ENCODE measurements at regions of chr17 and their contacts with region 1.

Region 1: GRCh38 chr17:33674685-33675084 is 381.6 kb upstream of the ASIC2 start:
- DNase-seq: peak; percentile 17 to 85
- H3K4me3 ChIP-seq: no peak overlapping the region
- H3K27ac ChIP-seq: no peak overlapping the region
- H3K4me1 ChIP-seq: no peaks in the 10 kb centered on the region
- H3K27me3 ChIP-seq: no peaks in the 10 kb centered on the region
- CTCF ChIP-seq: peak; percentile 48 to 78 (median 70)
- EP300 ChIP-seq: no peak
- POLR2A ChIP-seq: no peak
- RAD21 ChIP-seq: peak; percentile 70 to 73

Region 2: DNA sequence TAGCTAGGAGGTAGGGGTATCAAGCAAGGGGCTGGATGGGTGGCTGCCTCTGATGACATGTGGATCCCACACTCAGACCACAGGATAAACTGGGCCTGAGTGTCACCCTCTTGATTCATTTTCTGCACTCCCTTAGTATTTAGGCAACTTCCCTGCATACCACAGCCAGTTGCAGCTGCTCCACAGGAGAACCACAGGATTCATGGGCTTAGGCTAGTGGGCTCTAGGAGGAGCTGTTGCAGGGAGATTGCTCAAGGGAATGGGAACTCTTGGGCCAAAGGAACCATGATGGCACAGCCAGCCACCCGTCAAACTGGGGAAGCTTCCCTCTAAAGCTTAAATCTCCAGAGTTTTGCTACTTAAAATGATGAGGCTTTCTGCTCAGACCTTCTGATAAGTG is 111.9 kb before region 1 on chr17:
- CTCF ChIA-PET with region 1: interaction called, 12 read pairs
- POLR2A ChIA-PET with region 1: no interaction called
- DNase-seq: no peak
- H3K4me3 ChIP-seq: no peak overlapping the region
- H3K27ac ChIP-seq: no peak overlapping the region
- H3K4me1 ChIP-seq: no peaks in the 10 kb centered on the region
- H3K27me3 ChIP-seq: no peaks in the 10 kb centered on the region
- CTCF ChIP-seq: peak; percentile 24 to 58 (median 53); a peak in 3 of 4 replicates
- EP300 ChIP-seq: no peak
- POLR2A ChIP-seq: no peak
- RAD21 ChIP-seq: peak; percentile 44 to 68

Region 3: GRCh38 chr17:33575021-33575420 is 99.7 kb before region 1 on chr17:
- CTCF ChIA-PET with region 1: no interaction called
- POLR2A ChIA-PET with region 1: no interaction called
- DNase-seq: no peak
- H3K4me3 ChIP-seq: no peak overlapping the region
- H3K27ac ChIP-seq: no peak overlapping the region
- H3K4me1 ChIP-seq: no peaks in the 10 kb centered on the region; a peak in 1 of 7 replicates
- H3K27me3 ChIP-seq: 0 out of 7 replicates have a peak, but pooled peaks cover 0 to 3% (median 0%) of the 10 kb centered on the region in 4 experiments
- CTCF ChIP-seq: no peak
- EP300 ChIP-seq: no peak
- POLR2A ChIP-seq: no peak
- RAD21 ChIP-seq: no peak

Region 4: DNA sequence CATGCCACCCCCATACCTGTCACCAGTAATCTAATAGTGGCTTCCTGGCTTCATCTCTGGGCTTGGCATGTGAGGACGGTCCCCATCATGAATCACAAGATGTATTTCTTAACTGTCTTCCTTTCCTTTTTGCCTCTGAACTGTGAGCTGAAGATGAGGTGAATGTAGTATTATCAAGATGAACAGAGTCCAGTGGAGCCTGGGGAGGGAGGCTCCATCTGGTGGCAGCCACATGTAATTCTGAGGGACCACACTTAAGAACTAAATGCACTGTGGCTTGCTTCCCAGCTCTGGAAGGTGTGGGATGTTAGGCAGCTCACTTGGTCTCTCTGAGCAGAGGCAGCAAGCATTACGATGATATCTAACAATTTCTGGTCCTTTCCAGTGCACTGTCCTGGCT is 26.7 kb before region 1 on chr17:
- CTCF ChIA-PET with region 1: interaction called, 47 read pairs
- POLR2A ChIA-PET with region 1: no interaction called
- DNase-seq: no peak
- H3K4me3 ChIP-seq: no peak overlapping the region
- H3K27ac ChIP-seq: no peak overlapping the region
- H3K4me1 ChIP-seq: peaks cover 0 to 4% (median 1%) of the 10 kb centered on the region in 4 experiments; a peak in 2 of 7 replicates
- H3K27me3 ChIP-seq: no peaks in the 10 kb centered on the region
- CTCF ChIP-seq: peak; percentile 66 to 78 (median 67)
- EP300 ChIP-seq: no peak
- POLR2A ChIP-seq: no peak
- RAD21 ChIP-seq: peak; percentile 64 to 74

Region 5: GRCh38 chr17:33686171-33686570 is 11.5 kb after region 1 on chr17:
- CTCF ChIA-PET with region 1: interaction called, 58 read pairs
- POLR2A ChIA-PET with region 1: no interaction called
- DNase-seq: peak; percentile 19 to 77
- H3K4me3 ChIP-seq: no peak overlapping the region
- H3K27ac ChIP-seq: no peak overlapping the region
- H3K4me1 ChIP-seq: no peaks in the 10 kb centered on the region
- H3K27me3 ChIP-seq: peaks cover 0 to 1% (median 0%) of the 10 kb centered on the region in 4 experiments; a peak in 1 of 7 replicates
- CTCF ChIP-seq: peak; percentile 51 to 65 (median 58)
- EP300 ChIP-seq: no peak
- POLR2A ChIP-seq: no peak
- RAD21 ChIP-seq: peak; percentile 25 to 46; a peak in 3 of 4 replicates

Region 6: GRCh38 chr17:33750943-33751701 is 76.4 kb after region 1 on chr17:
- CTCF ChIA-PET with region 1: interaction called, 16 read pairs
- POLR2A ChIA-PET with region 1: no interaction called
- DNase-seq: peak; percentile 47 to 89
- H3K4me3 ChIP-seq: peak overlapping the region in 1 of 4 experiments; percentile 51; a peak in 2 of 8 replicates
- H3K27ac ChIP-seq: no peak overlapping the region
- H3K4me1 ChIP-seq: peaks cover 5 to 13% (median 8%) of the 10 kb centered on the region in 4 experiments
- H3K27me3 ChIP-seq: peaks cover 5 to 23% (median 16%) of the 10 kb centered on the region in 4 experiments
- CTCF ChIP-seq: peak; percentile 69 to 84 (median 72)
- EP300 ChIP-seq: no peak
- POLR2A ChIP-seq: no peak
- RAD21 ChIP-seq: peak; percentile 88 to 94